Panc1 (cell line): ENCODE measurements at regions of chr22 and their contacts with region 1.

Region 1: DNA sequence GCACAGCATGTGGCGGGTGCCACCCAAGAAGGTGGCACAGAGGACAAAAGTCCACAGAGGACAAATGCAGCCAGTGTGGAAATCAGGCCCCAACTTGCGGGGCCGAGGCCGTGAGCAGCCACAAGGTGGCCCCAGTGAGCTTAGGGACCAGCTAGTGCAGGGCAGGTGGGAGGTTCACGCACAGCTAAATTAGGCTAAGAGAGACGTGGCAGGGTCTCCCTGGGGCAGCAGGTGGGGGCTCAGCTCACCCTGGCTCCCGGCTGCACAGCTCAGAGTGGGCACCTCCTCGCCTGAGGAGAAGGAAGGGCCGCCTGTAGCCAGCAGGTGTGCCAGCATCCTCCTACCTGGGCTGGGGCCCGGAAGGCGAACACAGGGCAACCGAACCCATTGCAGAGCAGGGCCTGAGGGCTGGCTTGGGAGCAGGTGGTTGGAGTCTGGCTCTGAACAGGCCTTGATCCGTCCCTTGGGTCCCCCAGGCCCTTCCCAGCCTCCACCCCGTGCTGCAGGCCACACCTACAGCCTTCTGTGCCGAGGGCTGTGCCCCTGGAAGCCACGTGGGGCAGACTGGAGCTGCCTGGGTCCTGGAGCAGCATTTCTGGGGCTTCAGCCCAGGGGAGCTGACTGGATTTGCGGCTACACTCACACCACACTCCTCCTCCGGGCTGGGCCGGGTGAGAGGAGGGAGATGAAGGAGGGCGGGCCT is 26.1 kb upstream of the CELSR1 start:
- DNase-seq: no peak
- ATAC-seq: peak; percentile 95
- H3K4me3 ChIP-seq: peak overlapping the region in 1 of 2 experiments; percentile 30; a peak in 2 of 4 replicates
- H3K27ac ChIP-seq: no peak overlapping the region
- H3K4me1 ChIP-seq: no peaks in the 10 kb centered on the region
- H3K27me3 ChIP-seq: no peaks in the 10 kb centered on the region
- CTCF ChIP-seq: peak; percentile 86

Region 2: GRCh38 chr22:46367707-46368191 is 195.8 kb before region 1 on chr22:
- CTCF ChIA-PET with region 1: interaction called, 11 read pairs
- POLR2A ChIA-PET with region 1: no interaction called
- in situ Hi-C with region 1: no loop called
- intact Hi-C with region 1: no loop called
- DNase-seq: peak; percentile 46
- ATAC-seq: peak; percentile 91
- H3K4me3 ChIP-seq: no peak overlapping the region
- H3K27ac ChIP-seq: no peak overlapping the region
- H3K4me1 ChIP-seq: no peaks in the 10 kb centered on the region
- H3K27me3 ChIP-seq: no peaks in the 10 kb centered on the region
- CTCF ChIP-seq: peak; percentile 92

Region 3: GRCh38 chr22:46542011-46542985 is 21.2 kb before region 1 on chr22:
- CTCF ChIA-PET with region 1: no interaction called
- POLR2A ChIA-PET with region 1: no interaction called
- in situ Hi-C with region 1: no loop called
- intact Hi-C with region 1: no loop called
- DNase-seq: no peak
- ATAC-seq: peak; percentile 89
- H3K4me3 ChIP-seq: no peak overlapping the region
- H3K27ac ChIP-seq: peak overlapping the region; percentile 26; the same call in 1 of the 2 replicates
- H3K4me1 ChIP-seq: peaks cover 27% of the 10 kb centered on the region
- H3K27me3 ChIP-seq: no peaks in the 10 kb centered on the region
- CTCF ChIP-seq: peak; percentile 93

Region 4: DNA sequence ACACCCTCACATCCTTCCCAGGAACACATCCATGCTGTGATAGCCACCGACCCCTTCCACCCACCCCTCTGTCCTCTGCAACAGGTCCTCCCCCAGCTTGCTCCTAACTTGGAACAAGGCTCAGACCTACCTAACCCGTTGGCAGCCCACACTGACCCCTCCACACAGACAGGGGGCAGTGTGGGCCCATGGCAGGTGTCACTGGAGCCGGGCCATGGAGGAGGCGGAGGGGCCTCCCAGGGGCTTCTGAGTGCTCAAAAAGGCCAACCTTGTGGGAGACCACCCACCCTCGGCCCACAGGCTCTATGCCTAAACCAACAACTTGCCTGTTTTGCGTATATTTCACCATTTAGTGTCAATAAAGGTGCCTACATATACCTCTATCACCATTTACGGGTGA is 117.5 kb after region 1 on chr22:
- CTCF ChIA-PET with region 1: no interaction called
- POLR2A ChIA-PET with region 1: no interaction called
- in situ Hi-C with region 1: no loop called
- intact Hi-C with region 1: loop called (anchors 10 kb)
- DNase-seq: no peak
- ATAC-seq: no peak
- H3K4me3 ChIP-seq: no peak overlapping the region
- H3K27ac ChIP-seq: no peak overlapping the region
- H3K4me1 ChIP-seq: no peaks in the 10 kb centered on the region
- H3K27me3 ChIP-seq: no peaks in the 10 kb centered on the region
- CTCF ChIP-seq: no peak

Region 5: GRCh38 chr22:46737976-46738646 is 174.6 kb after region 1 on chr22 and contains the start of gene CERK:
- CTCF ChIA-PET with region 1: interaction called, 14 read pairs
- POLR2A ChIA-PET with region 1: no interaction called
- in situ Hi-C with region 1: no loop called
- intact Hi-C with region 1: no loop called
- DNase-seq: no peak
- ATAC-seq: peak; percentile 81
- H3K4me3 ChIP-seq: peak within 1 kb of the TSS; percentile 67 to 68
- H3K27ac ChIP-seq: peak within 1 kb of the TSS; percentile 76
- H3K4me1 ChIP-seq: peaks cover 46% of the 10 kb centered on the region
- H3K27me3 ChIP-seq: no peaks in the 10 kb centered on the region
- CTCF ChIP-seq: no peak
- total RNA-seq, gene CERK: 30.9 TPM

Region 6: DNA sequence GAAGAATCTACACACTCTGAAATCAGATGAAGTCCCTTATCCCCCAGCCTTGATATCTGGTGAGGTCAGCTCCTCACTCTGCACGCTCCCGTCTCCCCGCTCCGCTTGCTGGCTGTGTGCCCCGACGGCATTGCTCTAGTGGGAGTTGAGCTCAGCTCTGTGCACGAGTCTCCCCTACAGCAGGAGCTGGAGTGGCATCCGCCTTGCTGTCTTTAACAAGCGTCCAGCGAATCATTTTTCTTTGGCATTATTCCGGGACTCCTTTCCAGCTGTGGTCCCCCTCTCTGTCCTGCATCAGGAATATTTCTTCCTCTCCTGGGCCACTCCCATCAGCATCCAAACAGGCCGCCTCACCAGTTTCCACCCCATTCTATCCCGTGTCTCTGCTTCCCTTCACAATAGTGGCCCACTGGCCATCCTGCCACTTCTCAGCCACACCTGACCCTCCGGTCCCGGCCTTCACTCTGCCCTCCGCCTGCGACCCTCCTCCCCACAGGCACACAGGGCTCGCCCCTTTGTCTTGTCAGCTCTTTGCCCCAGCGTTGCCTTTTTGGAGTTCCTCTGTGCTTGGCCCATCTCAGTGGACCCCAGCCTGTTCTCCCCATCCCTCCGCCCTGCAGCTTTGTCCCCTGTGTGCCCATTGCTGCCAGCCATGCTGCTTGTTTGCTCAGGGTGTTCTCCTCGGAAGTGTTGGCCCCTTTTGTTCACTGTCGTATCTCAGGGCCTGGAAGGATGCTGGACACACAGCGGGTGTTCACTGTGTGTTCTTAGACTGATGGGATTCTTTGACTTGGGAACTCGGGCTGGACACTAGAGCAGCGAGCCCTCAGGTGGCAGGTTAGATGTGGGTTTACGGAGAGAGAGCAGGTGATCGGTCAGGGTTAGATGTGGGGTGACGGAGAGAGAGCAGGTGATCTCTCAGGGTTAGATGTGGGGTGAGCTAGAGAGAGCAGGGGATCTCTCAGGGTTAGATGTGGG is 640.8 kb after region 1 on chr22:
- CTCF ChIA-PET with region 1: interaction called, 11 read pairs
- POLR2A ChIA-PET with region 1: no interaction called
- in situ Hi-C with region 1: no loop called
- intact Hi-C with region 1: no loop called
- DNase-seq: no peak
- ATAC-seq: no peak
- H3K4me3 ChIP-seq: no peak overlapping the region
- H3K27ac ChIP-seq: no peak overlapping the region
- H3K4me1 ChIP-seq: no peaks in the 10 kb centered on the region
- H3K27me3 ChIP-seq: no peaks in the 10 kb centered on the region
- CTCF ChIP-seq: no peak